A673 (cell line): ENCODE measurements at regions of chr20 and their contacts with region 1.

Region 1: DNA sequence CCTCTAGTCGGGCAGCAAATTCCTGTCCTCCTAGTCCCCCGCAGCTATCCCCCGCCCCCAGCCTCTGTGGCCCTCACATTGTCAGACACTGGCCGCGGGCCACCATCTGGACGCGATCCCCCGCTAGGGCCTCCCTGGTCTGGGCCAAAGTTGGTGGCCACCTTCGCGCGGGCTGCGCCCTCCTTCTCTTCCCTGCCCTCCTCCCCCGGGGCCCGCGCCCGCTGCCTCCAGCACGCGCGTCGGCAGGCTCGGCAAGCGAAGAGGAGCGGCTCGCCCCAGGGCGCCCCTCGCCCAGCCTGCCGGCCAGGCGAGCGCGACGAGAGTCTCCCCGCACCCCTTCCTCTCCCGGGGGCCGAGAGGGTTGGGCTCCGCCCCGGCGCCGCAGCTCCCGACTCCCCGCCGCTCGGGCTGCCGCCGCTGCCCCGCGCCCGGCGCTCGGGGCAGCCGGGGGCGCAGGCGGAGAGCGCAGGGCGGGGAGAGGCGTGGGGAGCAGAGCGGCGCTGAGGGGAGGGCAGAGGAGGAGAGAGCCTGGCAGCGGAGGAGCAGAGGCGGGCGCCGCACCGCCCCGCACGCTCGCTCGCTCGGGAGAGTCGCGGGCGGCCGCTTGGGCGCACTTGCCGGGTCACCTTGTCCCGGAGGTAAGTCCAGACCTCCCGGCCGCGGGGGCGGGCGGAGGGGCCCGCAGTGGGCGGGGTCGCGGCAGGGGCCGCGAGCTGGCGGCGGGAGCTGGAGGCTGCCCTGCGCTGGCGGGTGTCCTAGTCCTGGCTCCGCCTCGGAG is at the start of gene SYNDIG1:
- DNase-seq: peak; percentile 66
- H3K4me3 ChIP-seq: peak within 1 kb of the TSS; percentile 71
- H3K27ac ChIP-seq: peak within 1 kb of the TSS; percentile 71
- H3K4me1 ChIP-seq: peaks cover 18% of the 10 kb centered on the region
- H3K27me3 ChIP-seq: peaks cover 40% of the 10 kb centered on the region
- CTCF ChIP-seq: no peak
- total RNA-seq, gene SYNDIG1: 16.6 and 17.9 TPM in 2 replicates

Region 2: DNA sequence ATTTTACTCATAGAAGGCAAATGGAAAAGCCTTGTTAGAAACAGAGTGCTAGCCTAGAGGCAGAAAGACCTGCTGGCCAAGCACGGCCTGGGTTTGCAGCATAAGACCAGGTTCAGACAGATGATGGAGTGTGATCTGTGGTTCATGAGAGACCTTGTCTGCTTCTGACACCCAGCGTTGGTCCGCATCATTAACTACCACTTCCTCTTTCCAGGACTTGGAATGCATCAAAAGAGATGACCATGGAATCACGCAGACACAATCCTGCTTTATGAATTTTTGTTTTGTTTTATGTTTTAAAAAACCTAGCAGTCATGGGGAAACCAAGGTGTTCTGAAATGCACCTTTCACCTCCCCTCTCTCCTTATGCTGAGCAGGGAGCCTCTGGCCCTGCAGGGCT is 76.7 kb before region 1 on chr20:
- CTCF ChIA-PET with region 1: no interaction called
- POLR2A ChIA-PET with region 1: no interaction called
- intact Hi-C with region 1: no loop called
- DNase-seq: no peak
- H3K4me3 ChIP-seq: no peak overlapping the region
- H3K27ac ChIP-seq: no peak overlapping the region
- H3K4me1 ChIP-seq: no peaks in the 10 kb centered on the region
- H3K27me3 ChIP-seq: no peaks in the 10 kb centered on the region
- CTCF ChIP-seq: no peak

Region 3: DNA sequence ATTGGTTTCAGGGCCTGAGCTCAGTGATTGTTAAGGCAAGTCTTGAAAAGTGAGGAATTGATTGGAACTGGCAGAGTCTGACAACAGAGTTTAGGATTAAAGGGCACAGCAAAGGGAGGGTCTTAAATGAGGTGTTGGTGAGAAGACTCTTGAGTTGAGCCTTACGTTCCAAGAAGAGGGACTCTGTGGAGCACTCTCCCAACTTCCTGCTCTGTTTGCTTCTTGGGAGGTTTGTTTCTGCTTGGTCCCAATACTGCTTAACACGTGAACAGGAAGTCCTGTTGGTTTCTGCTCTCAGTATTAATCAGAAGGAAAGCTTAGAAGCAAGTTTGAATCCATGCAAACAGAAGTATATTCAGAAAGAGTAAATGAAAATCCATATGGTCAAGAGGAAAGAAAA is 15.4 kb before region 1 on chr20:
- CTCF ChIA-PET with region 1: interaction called, 10 read pairs
- POLR2A ChIA-PET with region 1: no interaction called
- intact Hi-C with region 1: no loop called
- DNase-seq: no peak
- H3K4me3 ChIP-seq: no peak overlapping the region
- H3K27ac ChIP-seq: no peak overlapping the region
- H3K4me1 ChIP-seq: no peaks in the 10 kb centered on the region
- H3K27me3 ChIP-seq: no peaks in the 10 kb centered on the region
- CTCF ChIP-seq: no peak

Region 4: GRCh38 chr20:24651171-24651975 is 182.1 kb after region 1 on chr20:
- CTCF ChIA-PET with region 1: no interaction called
- POLR2A ChIA-PET with region 1: no interaction called
- intact Hi-C with region 1: loop called (anchors 5 kb)
- DNase-seq: no peak
- H3K4me3 ChIP-seq: no peak overlapping the region
- H3K27ac ChIP-seq: peak overlapping the region; percentile 94
- H3K4me1 ChIP-seq: peaks cover 62% of the 10 kb centered on the region
- H3K27me3 ChIP-seq: no peaks in the 10 kb centered on the region
- CTCF ChIP-seq: no peak

Region 5: DNA sequence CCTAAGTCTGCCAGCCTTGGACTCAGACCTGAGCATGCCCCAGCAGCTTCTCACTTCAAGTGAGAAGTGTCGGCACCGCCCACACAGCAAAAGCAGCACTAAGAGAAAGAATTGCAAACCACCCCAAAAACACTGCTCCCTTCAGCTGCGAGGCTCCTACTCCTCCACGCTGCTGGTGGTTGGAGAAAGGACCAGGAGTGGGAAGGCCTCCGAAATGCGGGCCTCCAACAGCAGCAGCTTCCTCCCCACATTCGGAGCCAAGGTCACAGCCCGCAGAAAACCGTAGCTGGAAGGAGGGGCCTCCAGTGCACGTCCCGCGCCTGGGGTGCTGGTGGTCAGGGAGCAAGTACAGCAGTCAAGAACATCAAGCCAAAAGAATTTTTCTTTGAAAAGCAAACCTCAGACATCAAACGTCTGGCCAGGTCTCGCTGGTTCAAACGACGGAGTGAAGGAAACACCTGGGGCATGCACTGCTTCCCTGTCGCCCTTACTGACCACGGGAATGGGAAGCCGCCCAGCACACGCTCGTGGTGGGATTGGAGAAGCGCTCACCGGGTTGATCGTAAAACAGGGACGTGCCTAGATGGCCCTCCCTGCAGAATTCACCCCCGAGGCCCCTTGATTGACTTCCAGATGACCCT is 294.2 kb after region 1 on chr20:
- CTCF ChIA-PET with region 1: no interaction called
- POLR2A ChIA-PET with region 1: no interaction called
- intact Hi-C with region 1: no loop called
- DNase-seq: no peak
- H3K4me3 ChIP-seq: no peak overlapping the region
- H3K27ac ChIP-seq: no peak overlapping the region
- H3K4me1 ChIP-seq: peaks cover 17% of the 10 kb centered on the region
- H3K27me3 ChIP-seq: no peaks in the 10 kb centered on the region
- CTCF ChIP-seq: no peak

Region 6: DNA sequence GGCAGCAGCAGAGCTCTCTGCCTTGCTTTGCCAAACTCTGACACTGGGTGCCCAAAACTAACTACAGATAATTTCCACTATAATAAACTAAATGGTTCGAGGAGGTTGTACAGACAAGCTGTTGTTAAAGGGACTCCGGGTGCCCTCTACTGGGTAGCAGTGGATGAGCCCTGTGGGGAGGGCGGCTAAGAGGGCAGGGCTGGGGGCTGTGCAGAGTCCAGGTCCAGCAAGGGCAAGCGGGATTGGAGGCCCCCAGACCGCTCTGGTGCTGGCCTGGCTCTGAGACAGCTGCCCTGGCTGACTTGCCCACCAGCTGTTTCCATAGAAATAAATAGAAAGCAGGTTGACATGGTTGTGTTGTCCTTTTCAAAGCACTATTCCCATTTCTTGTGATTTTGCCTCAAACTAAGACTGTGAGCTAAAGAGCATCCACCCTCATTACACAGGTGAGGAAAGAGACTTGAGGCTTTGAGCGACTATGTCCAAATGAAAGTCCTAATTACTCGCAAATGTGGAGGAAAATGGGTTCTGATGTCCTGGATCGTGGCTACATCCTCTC is 312.2 kb after region 1 on chr20:
- CTCF ChIA-PET with region 1: no interaction called
- POLR2A ChIA-PET with region 1: no interaction called
- intact Hi-C with region 1: loop called (anchors 10 kb)
- DNase-seq: peak; percentile 79
- H3K4me3 ChIP-seq: no peak overlapping the region
- H3K27ac ChIP-seq: peak overlapping the region; percentile 59
- H3K4me1 ChIP-seq: peaks cover 34% of the 10 kb centered on the region
- H3K27me3 ChIP-seq: no peaks in the 10 kb centered on the region
- CTCF ChIP-seq: peak; percentile 83